PC-9 (cell line): ENCODE measurements at regions of chr5 and their contacts with region 1.

Region 1: DNA sequence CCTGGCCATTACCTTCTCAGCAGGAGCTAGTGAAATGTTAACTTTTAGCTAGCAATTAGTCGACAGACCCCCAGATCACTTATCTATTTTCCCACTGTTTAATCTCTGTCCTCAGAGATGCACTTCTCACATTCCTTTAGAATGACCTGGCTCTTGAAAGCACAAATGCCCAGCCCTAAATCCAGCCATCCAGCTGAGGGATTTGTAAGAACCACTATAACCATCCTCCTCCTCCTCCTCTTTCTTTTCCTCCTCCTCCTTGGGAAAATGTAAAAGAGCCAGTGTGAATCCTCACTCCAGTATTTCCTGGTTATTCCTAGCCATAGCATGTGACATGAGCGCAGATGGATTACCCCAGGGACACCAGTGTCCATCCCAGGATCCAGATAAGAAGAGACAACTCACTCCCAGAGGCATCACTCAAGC is 124.3 kb downstream of the ENC1 start:
- DNase-seq: no peak
- H3K4me3 ChIP-seq: no peak overlapping the region
- H3K27ac ChIP-seq: no peak overlapping the region
- H3K4me1 ChIP-seq: peaks cover 36% of the 10 kb centered on the region
- H3K27me3 ChIP-seq: no peaks in the 10 kb centered on the region
- CTCF ChIP-seq: no peak

Region 2: DNA sequence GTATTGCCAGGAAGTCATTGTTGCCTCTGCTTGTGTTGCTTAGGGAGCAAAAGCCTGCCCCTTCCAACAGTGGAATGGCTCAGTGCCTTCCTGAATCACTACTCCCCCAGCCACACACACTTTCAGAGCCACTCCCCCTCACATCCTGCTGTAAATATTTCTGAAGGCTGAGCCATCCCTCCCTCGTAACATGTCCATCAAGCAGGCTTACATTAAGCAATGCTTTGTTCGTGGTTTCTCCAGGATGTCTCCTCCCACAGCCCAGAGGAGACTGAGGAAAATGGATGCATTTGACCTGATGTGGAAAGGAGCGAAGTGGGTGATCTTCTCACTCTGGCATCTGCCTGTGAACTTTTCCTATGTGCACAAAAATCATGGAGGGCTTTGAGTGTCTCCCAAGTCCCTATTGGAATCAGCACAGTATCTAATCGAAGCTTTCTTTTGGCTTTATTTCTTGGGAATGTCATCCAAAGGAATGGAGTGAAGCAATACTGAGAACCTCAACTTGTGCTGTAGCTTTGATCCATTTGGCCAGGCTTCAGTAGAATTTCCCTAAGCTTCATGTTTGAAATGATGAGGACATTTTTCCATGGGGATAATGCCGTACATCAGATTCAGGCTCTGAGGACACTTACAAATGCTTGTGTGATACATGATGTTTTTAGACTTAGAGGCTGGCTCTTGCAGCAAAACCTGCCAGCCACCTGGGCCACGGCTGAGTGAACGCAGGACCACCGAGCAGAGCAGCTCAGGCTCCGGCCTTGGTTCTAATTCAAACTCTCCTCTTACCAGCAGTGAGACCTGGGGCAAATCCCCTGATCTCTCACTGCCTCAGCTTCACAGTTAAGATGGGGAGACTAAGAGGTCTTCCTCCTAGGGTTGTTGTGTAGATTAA is 264.8 kb before region 1 on chr5:
- CTCF ChIA-PET with region 1: no interaction called
- POLR2A ChIA-PET with region 1: interaction called, 10 read pairs
- intact Hi-C with region 1: no loop called
- DNase-seq: peak; percentile 71 to 96
- H3K4me3 ChIP-seq: no peak overlapping the region
- H3K27ac ChIP-seq: peak overlapping the region; percentile 93
- H3K4me1 ChIP-seq: peaks cover 40% of the 10 kb centered on the region
- H3K27me3 ChIP-seq: no peaks in the 10 kb centered on the region
- CTCF ChIP-seq: no peak

Region 3: GRCh38 chr5:74386571-74387334 is 129.5 kb before region 1 on chr5:
- CTCF ChIA-PET with region 1: no interaction called
- POLR2A ChIA-PET with region 1: no interaction called
- intact Hi-C with region 1: no loop called
- DNase-seq: peak; percentile 9 to 92
- H3K4me3 ChIP-seq: no peak overlapping the region
- H3K27ac ChIP-seq: peak overlapping the region; percentile 88
- H3K4me1 ChIP-seq: peaks cover 51% of the 10 kb centered on the region
- H3K27me3 ChIP-seq: no peaks in the 10 kb centered on the region
- CTCF ChIP-seq: no peak